H1 (cell line): ENCODE measurements at regions of chr1 and their contacts with region 1.

Region 1: DNA sequence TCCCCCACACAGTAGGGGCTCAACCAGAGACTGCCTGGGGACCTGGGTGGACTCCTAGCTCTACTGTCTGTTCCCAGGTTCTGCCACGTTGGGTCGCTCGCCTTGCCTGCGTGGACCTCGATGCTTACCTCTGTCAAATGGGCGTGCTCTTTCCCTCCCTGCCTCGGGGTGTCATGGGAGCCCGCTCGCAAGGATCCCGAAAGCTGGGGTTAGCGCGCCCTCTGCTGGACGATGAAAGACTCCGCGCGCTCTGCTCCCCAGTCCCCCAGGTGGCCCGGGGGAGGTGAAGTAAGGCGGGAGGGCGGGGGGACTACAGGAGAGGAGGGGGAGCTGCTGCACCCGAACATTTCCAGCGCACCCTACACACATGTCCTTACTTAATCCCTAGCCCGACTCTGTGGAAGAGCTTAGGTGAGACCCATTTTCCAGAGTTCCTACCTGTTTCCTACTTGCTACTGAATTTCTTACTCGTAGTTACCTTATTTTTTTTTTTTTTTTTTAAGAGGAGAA is 2.3 kb upstream of the BSND start:
- DNase-seq: peak; percentile 61 to 96
- H3K4me3 ChIP-seq: peak overlapping the region; percentile 12 to 65 (median 50); a peak in 7 of 8 replicates
- H3K27ac ChIP-seq: no peak overlapping the region
- H3K4me1 ChIP-seq: peaks cover 16 to 30% (median 23%) of the 10 kb centered on the region in 4 experiments
- H3K27me3 ChIP-seq: peaks cover 4 to 45% (median 38%) of the 10 kb centered on the region in 4 experiments
- CTCF ChIP-seq: peak; percentile 78 to 95 (median 82)
- EP300 ChIP-seq: no peak
- POLR2A ChIP-seq: no peak
- RAD21 ChIP-seq: peak; percentile 95 to 98

Region 2: DNA sequence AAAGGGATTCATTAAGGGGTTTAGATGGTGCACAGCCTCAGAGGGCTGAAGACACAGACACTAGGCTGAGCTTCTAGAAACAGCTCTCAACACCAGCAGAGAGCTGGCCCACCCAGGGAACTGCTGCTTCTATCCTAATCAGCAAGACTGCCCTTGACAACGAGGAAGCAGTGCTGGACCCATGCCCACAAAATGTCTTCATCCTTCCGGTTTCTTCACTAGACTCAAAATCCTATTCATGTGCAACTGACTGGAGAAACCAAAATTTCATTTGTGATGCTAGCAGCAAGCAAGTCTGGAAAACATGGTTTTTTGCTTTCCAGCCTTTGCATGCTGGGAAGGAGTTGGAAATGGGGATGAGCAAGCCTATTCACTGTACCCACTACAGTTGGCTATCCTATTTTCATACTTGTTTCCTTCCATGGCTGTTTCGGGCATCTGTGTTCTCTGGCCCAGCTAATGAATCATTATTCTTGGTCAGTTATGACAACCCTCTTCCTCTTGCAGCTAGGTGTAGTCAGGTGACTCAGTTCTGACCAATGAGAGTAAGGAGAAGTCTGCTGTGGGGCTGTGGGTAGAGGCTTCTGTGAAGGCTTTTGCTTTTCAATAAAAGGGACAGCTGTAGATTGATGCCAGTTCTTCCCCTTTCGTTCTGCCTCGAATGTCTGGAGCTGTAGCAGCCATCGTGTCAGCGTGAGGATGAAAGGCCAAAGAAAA is 30.6 kb before region 1 on chr1:
- CTCF ChIA-PET with region 1: interaction called, 49 read pairs
- POLR2A ChIA-PET with region 1: no interaction called
- DNase-seq: no peak
- H3K4me3 ChIP-seq: no peak overlapping the region
- H3K27ac ChIP-seq: no peak overlapping the region
- H3K4me1 ChIP-seq: peaks cover 0 to 14% (median 11%) of the 10 kb centered on the region in 4 experiments; a peak in 5 of 7 replicates
- H3K27me3 ChIP-seq: no peaks in the 10 kb centered on the region
- CTCF ChIP-seq: no peak
- EP300 ChIP-seq: no peak
- POLR2A ChIP-seq: no peak
- RAD21 ChIP-seq: no peak

Region 3: GRCh38 chr1:54973205-54973921 is 23.1 kb before region 1 on chr1:
- CTCF ChIA-PET with region 1: interaction called, 53 read pairs
- POLR2A ChIA-PET with region 1: interaction called, 5 read pairs
- DNase-seq: no peak
- H3K4me3 ChIP-seq: no peak overlapping the region
- H3K27ac ChIP-seq: no peak overlapping the region
- H3K4me1 ChIP-seq: peaks cover 0 to 4% (median under 1%) of the 10 kb centered on the region in 4 experiments; a peak in 4 of 7 replicates
- H3K27me3 ChIP-seq: no peaks in the 10 kb centered on the region
- CTCF ChIP-seq: peak; percentile 18 to 63 (median 50)
- EP300 ChIP-seq: no peak
- POLR2A ChIP-seq: no peak
- RAD21 ChIP-seq: peak; percentile 45 to 53; a peak in 3 of 4 replicates

Region 4: GRCh38 chr1:54980528-54981241 is 15.7 kb before region 1 on chr1 and contains the start of gene TMEM61:
- CTCF ChIA-PET with region 1: interaction called, 58 read pairs
- POLR2A ChIA-PET with region 1: interaction called, 4 read pairs
- DNase-seq: peak in 1 of 2 experiments; percentile 66
- H3K4me3 ChIP-seq: peak within 1 kb of the TSS; percentile 39 to 66 (median 50)
- H3K27ac ChIP-seq: no peak within 1 kb of the TSS
- H3K4me1 ChIP-seq: peaks cover 4 to 8% (median 7%) of the 10 kb centered on the region in 4 experiments; a peak in 6 of 7 replicates
- H3K27me3 ChIP-seq: peaks cover 0 to 29% (median 18%) of the 10 kb centered on the region in 4 experiments; a peak in 6 of 7 replicates
- CTCF ChIP-seq: no peak
- EP300 ChIP-seq: no peak
- POLR2A ChIP-seq: no peak
- RAD21 ChIP-seq: no peak
- total RNA-seq, gene TMEM61: 0.50 and 0.54 TPM in 2 replicates

Region 5: GRCh38 chr1:55015731-55016620 is 19.6 kb after region 1 on chr1:
- CTCF ChIA-PET with region 1: interaction called, 68 read pairs
- POLR2A ChIA-PET with region 1: no interaction called
- DNase-seq: no peak
- H3K4me3 ChIP-seq: no peak overlapping the region
- H3K27ac ChIP-seq: no peak overlapping the region
- H3K4me1 ChIP-seq: peaks cover 0 to 3% (median 1%) of the 10 kb centered on the region in 4 experiments; a peak in 3 of 7 replicates
- H3K27me3 ChIP-seq: no peaks in the 10 kb centered on the region; a peak in 2 of 7 replicates
- CTCF ChIP-seq: no peak
- EP300 ChIP-seq: no peak
- POLR2A ChIP-seq: no peak
- RAD21 ChIP-seq: no peak